Caco-2 (cell line): ENCODE measurements at regions of chr13 and their contacts with region 1.

Region 1: DNA sequence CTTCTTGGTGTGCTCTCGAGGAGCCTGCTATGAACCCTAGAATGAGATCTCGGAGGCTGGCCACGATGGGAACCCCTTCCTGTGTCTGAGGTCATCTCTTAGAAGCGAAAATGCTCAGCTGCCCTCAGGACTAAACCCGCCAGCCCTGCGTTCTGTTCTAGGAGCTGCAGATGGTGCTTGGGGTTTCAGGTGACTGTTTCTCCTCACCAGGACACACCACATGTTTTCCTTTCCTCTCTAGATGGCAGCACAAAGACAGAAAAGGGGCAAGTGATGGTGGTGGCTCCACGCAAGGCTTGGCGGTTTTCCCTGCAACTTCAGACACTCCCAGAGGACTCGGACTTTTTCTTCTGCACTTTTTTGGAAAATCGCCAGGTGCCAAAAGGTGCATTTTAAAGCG is 60.1 kb downstream of the RNASEH2B start:
- DNase-seq: peak; percentile 49 to 57
- H3K4me3 ChIP-seq: no peak overlapping the region
- H3K4me3 Mint-ChIP-seq: no peak overlapping the region
- H3K27ac Mint-ChIP-seq: no peak overlapping the region
- H3K4me1 ChIP-seq: no peaks in the 10 kb centered on the region
- H3K4me1 Mint-ChIP-seq: no peaks in the 10 kb centered on the region
- H3K27me3 ChIP-seq: no peaks in the 10 kb centered on the region
- H3K27me3 Mint-ChIP-seq: no peaks in the 10 kb centered on the region
- CTCF ChIP-seq: peak; percentile 20 to 55

Region 2: GRCh38 chr13:51034906-51035305 is 65.2 kb after region 1 on chr13:
- CTCF ChIA-PET with region 1: no interaction called
- POLR2A ChIA-PET with region 1: no interaction called
- intact Hi-C with region 1: loop called (anchors 2 kb)
- DNase-seq: peak in 1 of 2 experiments; percentile 9
- H3K4me3 ChIP-seq: no peak overlapping the region
- H3K4me3 Mint-ChIP-seq: no peak overlapping the region
- H3K27ac Mint-ChIP-seq: no peak overlapping the region
- H3K4me1 ChIP-seq: peaks cover 4% of the 10 kb centered on the region; the same call in 1 of the 2 replicates
- H3K4me1 Mint-ChIP-seq: peaks cover 17% of the 10 kb centered on the region
- H3K27me3 ChIP-seq: no peaks in the 10 kb centered on the region
- H3K27me3 Mint-ChIP-seq: no peaks in the 10 kb centered on the region
- CTCF ChIP-seq: no peak

Region 3: DNA sequence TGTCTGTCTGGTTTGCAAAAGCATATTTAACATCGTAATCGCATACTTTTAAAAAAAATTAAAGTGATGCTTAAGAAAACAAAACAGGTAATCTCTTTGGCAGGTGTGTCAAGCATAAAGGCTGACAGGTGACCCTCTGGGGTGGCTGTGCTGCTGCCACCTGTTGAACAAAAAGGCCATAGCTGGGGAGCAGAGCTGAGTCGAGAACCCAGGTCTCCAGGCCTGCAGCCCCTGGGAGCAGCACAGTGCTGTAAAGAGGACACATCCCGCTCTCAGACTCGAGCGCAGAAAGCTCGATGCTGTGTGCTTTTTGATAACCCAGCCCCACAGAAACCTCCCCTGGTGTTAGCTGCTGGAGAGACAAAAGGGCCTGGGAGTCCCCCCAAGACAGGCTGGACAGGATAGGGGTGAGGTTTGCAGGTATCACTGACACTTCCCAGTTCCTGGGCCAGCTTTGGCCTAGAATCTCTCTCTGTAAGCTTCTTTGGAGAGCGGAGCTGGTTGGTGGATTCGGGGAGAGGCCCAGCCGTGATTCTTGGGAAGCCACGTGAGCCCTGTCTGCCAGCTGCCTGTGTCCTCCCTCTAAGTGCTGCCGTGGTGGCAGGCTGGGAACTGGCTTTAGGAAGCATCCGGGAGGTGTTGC is 74.5 kb after region 1 on chr13:
- CTCF ChIA-PET with region 1: interaction called, 10 read pairs
- POLR2A ChIA-PET with region 1: no interaction called
- intact Hi-C with region 1: loop called (anchors 1 kb)
- DNase-seq: peak in 1 of 2 experiments; percentile 42
- H3K4me3 ChIP-seq: no peak overlapping the region
- H3K4me3 Mint-ChIP-seq: no peak overlapping the region
- H3K27ac Mint-ChIP-seq: no peak overlapping the region
- H3K4me1 ChIP-seq: no peaks in the 10 kb centered on the region
- H3K4me1 Mint-ChIP-seq: no peaks in the 10 kb centered on the region
- H3K27me3 ChIP-seq: no peaks in the 10 kb centered on the region
- H3K27me3 Mint-ChIP-seq: no peaks in the 10 kb centered on the region
- CTCF ChIP-seq: peak in 1 of 2 experiments; percentile 72